Esophagus muscularis mucosa (tissue), 4 donors: ENCODE measurements at regions of chr12 and their contacts with region 1.

Region 1: DNA sequence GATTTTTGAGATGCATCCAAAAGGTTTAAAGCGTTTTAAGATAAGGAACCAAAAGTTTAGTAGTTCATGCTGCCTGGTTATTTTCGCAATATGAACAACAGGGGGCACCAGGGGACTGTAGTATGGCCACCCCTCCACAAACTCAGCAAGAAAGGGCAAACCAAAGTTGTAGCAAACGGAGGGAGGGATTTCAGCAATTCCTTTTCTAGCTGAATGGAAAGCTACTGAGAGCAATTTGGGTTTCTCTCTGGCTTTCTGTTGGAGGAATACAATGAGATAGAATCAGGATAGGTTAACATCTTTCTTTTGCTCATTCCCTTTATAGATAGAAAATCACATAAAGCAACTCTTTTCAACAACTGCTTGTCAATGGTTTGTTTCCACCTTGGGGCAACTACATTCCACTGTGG is 62.5 kb downstream of the DRAM1 start:
- DNase-seq: no peak
- H3K4me3 ChIP-seq: no peak overlapping the region
- H3K27ac ChIP-seq: peak overlapping the region; percentile 2 to 60 (median 44)
- H3K4me1 ChIP-seq: peaks cover 4 to 32% (median 20%) of the 10 kb centered on the region in 4 donors
- H3K27me3 ChIP-seq: peaks cover 0 to 3% (median 0%) of the 10 kb centered on the region in 4 donors
- CTCF ChIP-seq: peak; percentile 69 to 78 (median 69)
- EP300 ChIP-seq: no peak
- POLR2A ChIP-seq: no peak

Region 2: GRCh38 chr12:102061560-102062418 is 121.9 kb after region 1 on chr12 and contains the start of gene WASHC3:
- intact Hi-C with region 1: loop called (anchors 10 kb)
- DNase-seq: peak; percentile 99
- H3K4me3 ChIP-seq: peak within 1 kb of the TSS; percentile 70 to 85 (median 83)
- H3K27ac ChIP-seq: peak within 1 kb of the TSS; percentile 86 to 91 (median 90)
- H3K4me1 ChIP-seq: peaks cover 0 to 12% (median 10%) of the 10 kb centered on the region in 4 donors
- H3K27me3 ChIP-seq: no peaks in the 10 kb centered on the region
- CTCF ChIP-seq: no peak
- EP300 ChIP-seq: no peak
- POLR2A ChIP-seq: peak; percentile 90
- total RNA-seq, gene WASHC3: 85.7 to 101 (median 86.8) TPM

Region 3: GRCh38 chr12:102484428-102484958 is 544.6 kb after region 1 on chr12:
- intact Hi-C with region 1: loop called (anchors 5 kb)
- DNase-seq: peak; percentile 94
- H3K4me3 ChIP-seq: peak overlapping the region; percentile 20 to 40 (median 29)
- H3K27ac ChIP-seq: peak overlapping the region; percentile 33 to 64 (median 54)
- H3K4me1 ChIP-seq: peaks cover 7 to 26% (median 20%) of the 10 kb centered on the region in 4 donors
- H3K27me3 ChIP-seq: no peaks in the 10 kb centered on the region
- CTCF ChIP-seq: peak; percentile 73 to 97 (median 89)
- EP300 ChIP-seq: no peak
- POLR2A ChIP-seq: no peak